ENCODE measurements at regions of chr7 and their contacts with region 1.

Region 1: DNA sequence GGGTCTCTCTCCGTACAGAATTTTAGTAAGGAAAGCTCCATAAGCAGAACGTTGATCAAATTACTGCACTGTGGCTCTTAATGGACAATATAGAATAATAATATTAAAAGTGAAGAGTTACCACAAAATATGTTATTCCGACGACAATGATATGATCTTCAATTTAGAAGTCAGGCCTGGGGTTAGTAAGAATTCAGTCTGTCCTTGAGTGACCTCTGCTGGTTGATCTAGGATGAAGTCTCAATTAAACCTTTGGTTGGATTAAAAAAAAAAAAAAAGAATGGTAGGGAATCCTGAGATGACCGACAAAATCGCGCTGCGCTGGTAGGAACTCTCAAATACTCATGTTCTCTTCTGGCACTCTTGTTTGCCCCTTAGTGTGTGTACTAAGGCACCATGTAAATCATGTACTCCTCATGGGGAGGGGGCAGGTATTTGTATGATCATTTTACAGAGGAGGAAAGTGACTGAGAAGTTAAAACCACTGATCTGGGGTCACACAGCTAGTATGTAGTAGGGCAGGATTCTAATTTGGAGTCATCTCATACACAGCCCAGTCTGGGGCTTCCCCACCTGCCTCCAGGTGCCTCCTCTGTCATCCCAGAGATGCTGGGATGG is 161.3 kb upstream of the NPVF start:
- DNase-seq: peak in 3 of 4 donors; percentile 19 to 60 (median 38)
- ATAC-seq: peak; percentile 55
- H3K4me3 ChIP-seq: no peak overlapping the region
- H3K27ac ChIP-seq: no peak overlapping the region
- H3K4me1 ChIP-seq: peaks cover 48% of the 10 kb centered on the region
- H3K27me3 ChIP-seq: no peaks in the 10 kb centered on the region
- CTCF ChIP-seq: peak; percentile 37 to 95 (median 79)
- POLR2A ChIP-seq: no peak

Region 2: DNA sequence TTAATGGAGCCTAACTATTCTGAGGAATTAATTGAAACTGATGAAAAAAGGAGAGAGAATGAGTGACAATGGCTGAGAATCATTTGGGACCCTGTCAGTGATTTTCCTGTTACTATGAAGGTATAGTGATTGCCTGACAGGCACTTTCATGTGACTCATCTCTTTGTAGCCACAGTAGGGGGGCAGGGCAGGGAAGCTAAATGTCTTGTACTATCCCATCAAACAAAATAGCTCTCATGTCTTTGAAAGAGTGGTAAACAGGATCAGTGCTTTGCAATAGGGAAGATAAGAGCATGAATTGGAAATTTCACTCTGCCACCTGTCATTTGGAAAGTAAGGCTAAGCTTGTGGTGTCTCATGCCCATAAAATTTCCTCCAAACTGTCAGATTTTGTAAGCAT is 537.8 kb before region 1 on chr7:
- intact Hi-C with region 1: no loop called
- DNase-seq: no peak
- ATAC-seq: no peak
- H3K4me3 ChIP-seq: no peak overlapping the region
- H3K27ac ChIP-seq: no peak overlapping the region
- H3K4me1 ChIP-seq: peaks cover 4% of the 10 kb centered on the region
- H3K27me3 ChIP-seq: no peaks in the 10 kb centered on the region
- CTCF ChIP-seq: no peak
- POLR2A ChIP-seq: no peak

Region 3: GRCh38 chr7:24917510-24918239 is 471.9 kb before region 1 on chr7:
- intact Hi-C with region 1: no loop called
- DNase-seq: no peak
- ATAC-seq: peak; percentile 21
- H3K4me3 ChIP-seq: no peak overlapping the region
- H3K27ac ChIP-seq: no peak overlapping the region
- H3K4me1 ChIP-seq: peaks cover 31% of the 10 kb centered on the region
- H3K27me3 ChIP-seq: no peaks in the 10 kb centered on the region
- CTCF ChIP-seq: no peak
- POLR2A ChIP-seq: no peak

Region 4: GRCh38 chr7:25028370-25029021 is 361.1 kb before region 1 on chr7:
- intact Hi-C with region 1: no loop called
- DNase-seq: no peak
- ATAC-seq: no peak
- H3K4me3 ChIP-seq: no peak overlapping the region
- H3K27ac ChIP-seq: no peak overlapping the region
- H3K4me1 ChIP-seq: peaks cover 3% of the 10 kb centered on the region
- H3K27me3 ChIP-seq: no peaks in the 10 kb centered on the region
- CTCF ChIP-seq: no peak
- POLR2A ChIP-seq: no peak

Region 5: DNA sequence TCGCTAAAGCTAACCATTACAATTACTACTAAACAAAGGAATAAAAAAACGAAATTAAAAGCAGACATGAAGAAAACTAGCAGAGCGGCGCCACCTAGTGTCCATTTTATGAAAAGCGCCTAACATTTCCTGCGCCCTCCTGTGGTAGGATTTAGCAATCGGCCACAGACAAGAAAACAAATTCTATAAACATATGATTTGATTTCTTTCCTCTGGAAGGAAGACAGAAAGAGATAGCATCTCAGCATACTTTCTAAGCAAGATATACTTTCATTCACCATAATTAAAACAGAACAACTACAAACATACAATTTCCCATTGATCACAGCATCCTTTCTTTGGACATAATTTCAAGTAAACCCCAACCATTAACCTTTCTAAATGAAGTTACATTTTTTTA is 176.4 kb after region 1 on chr7:
- intact Hi-C with region 1: loop called (anchors 10 kb)
- DNase-seq: peak; percentile 59 to 74 (median 66)
- ATAC-seq: peak; percentile 46
- H3K4me3 ChIP-seq: no peak overlapping the region
- H3K27ac ChIP-seq: no peak overlapping the region
- H3K4me1 ChIP-seq: peaks cover 4% of the 10 kb centered on the region
- H3K27me3 ChIP-seq: no peaks in the 10 kb centered on the region
- CTCF ChIP-seq: peak; percentile 94 to 100 (median 100)
- POLR2A ChIP-seq: no peak